GM10248 (cell line): ENCODE measurements at regions of chr3 and their contacts with region 1.

Region 1: GRCh38 chr3:197906023-197906849 is 43.8 kb upstream of the RPL35A start:
- DNase-seq: peak; percentile 77
- CTCF ChIP-seq: peak; percentile 93

Region 2: DNA sequence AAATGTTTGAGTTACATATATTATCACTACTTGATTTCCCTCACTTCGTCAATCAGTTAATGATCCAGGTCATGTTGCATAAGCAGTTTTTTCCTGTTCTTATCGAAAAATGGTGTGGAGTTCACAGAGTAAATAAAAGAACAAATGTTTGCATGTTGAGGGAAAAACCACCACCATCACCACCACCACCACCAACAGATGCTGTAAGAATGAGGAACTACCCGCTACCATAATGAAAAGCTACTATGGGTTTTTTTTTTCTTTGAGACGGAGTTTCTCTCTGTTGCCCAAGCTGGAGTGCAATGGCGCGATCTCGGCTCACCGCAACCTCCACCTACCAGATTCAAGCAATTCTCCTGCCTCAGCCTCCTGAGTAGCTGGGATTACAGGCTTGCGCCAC is 197.1 kb before region 1 on chr3:
- CTCF ChIA-PET with region 1: no interaction called
- POLR2A ChIA-PET with region 1: no interaction called
- DNase-seq: no peak
- CTCF ChIP-seq: no peak

Region 3: GRCh38 chr3:197889204-197889930 is 16.9 kb before region 1 on chr3:
- CTCF ChIA-PET with region 1: interaction called, 16 read pairs
- POLR2A ChIA-PET with region 1: no interaction called
- DNase-seq: no peak
- CTCF ChIP-seq: no peak

Region 4: DNA sequence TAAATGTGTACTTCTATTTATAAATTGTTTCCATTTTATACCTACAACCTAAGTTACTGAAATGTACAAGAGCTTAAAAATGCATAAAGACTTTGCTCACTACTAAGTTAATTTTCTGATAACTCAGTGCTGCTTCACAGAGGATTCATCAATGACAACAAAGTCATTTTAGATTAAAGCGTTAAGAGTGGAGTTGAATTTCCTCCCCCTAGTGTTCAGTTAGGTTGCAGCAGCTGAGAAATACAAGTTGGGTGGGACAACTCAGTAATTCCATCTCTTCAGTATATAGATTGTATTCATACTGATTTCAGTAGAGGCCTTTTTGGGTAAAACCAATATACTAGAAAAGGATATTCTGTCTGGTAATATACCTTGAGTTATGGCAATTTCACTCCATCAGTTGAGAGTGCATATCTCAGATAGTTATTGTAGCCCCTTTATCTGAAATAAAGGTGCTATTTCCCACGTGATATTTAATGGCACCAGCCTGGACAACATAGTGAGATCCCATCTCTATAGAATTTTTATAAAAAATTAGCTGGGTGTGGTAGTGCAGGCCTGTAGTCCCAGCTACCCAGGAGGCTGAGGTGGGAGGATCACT is 36.8 kb after region 1 on chr3:
- CTCF ChIA-PET with region 1: interaction called, 43 read pairs
- POLR2A ChIA-PET with region 1: interaction called, 3 read pairs
- DNase-seq: peak; percentile 49
- CTCF ChIP-seq: peak; percentile 58